CD8-positive, alpha-beta T cell (primary cell): ENCODE measurements at regions of chr6 and their contacts with region 1.

Region 1: GRCh38 chr6:156686995-156687788 is 90.0 kb upstream of the ARID1B start:
- DNase-seq: peak; percentile 60 to 92 (median 73)
- ATAC-seq: peak; percentile 83
- H3K4me3 ChIP-seq: peak overlapping the region; percentile 92 to 93
- H3K4me3 Mint-ChIP-seq: peak overlapping the region; percentile 89
- H3K27ac ChIP-seq: peak overlapping the region; percentile 89 to 95
- H3K27ac Mint-ChIP-seq: peak overlapping the region; percentile 97
- H3K4me1 ChIP-seq: peaks cover 8% of the 10 kb centered on the region
- H3K4me1 Mint-ChIP-seq: peaks cover 16% of the 10 kb centered on the region
- H3K27me3 ChIP-seq: no peaks in the 10 kb centered on the region
- H3K27me3 Mint-ChIP-seq: peaks cover 6% of the 10 kb centered on the region
- CTCF ChIP-seq: no peak

Region 2: DNA sequence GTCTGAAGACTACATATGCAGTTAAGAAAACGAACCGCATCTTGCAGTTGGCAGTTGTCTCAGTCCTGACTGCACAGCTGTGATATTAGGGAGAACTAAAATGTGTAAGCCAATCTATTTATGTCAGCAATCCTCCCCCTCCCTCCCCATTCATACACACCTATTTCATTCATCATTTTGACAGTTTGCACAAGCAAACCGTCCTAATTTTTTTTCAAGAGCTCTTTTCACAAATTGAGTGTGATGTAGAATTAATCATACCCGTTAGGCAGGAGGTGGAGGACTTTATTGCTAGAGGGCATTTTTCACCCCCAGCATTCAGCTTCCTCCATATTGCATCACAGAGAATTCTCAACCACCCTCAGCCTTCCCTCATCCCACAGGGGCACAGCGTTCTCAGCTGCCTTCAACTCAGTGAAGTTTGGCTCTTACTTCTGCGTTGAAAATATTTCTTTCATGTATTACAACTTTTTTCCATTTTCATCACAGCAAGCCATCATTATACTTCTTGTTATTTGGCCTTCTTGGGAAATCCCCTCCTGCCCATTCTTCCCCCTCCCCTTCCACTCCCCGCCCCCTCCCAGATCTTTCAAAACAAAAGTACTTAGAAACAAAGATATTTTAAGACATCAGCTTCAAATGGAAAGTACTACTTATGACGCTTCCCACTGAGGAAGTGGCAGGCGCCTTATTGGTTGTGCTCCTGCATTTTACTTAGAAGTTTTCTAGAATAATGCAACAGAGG is 1269.0 kb before region 1 on chr6:
- CTCF ChIA-PET with region 1: no interaction called
- POLR2A ChIA-PET with region 1: no interaction called
- intact Hi-C with region 1: loop called in 1 of 2 experiments (anchors 2 kb)
- DNase-seq: peak in 8 of 9 experiments; percentile 9 to 85 (median 36)
- ATAC-seq: peak; percentile 85
- H3K4me3 ChIP-seq: peak overlapping the region; percentile 21 to 41
- H3K4me3 Mint-ChIP-seq: peak overlapping the region; percentile 75
- H3K27ac ChIP-seq: peak overlapping the region; percentile 32 to 74
- H3K27ac Mint-ChIP-seq: peak overlapping the region; percentile 96
- H3K4me1 ChIP-seq: peaks cover 17% of the 10 kb centered on the region
- H3K4me1 Mint-ChIP-seq: peaks cover 40% of the 10 kb centered on the region
- H3K27me3 ChIP-seq: no peaks in the 10 kb centered on the region
- H3K27me3 Mint-ChIP-seq: no peaks in the 10 kb centered on the region
- CTCF ChIP-seq: no peak

Region 3: GRCh38 chr6:156707818-156708217 is 20.6 kb after region 1 on chr6:
- CTCF ChIA-PET with region 1: no interaction called
- POLR2A ChIA-PET with region 1: no interaction called
- intact Hi-C with region 1: no loop called
- DNase-seq: no peak
- ATAC-seq: no peak
- H3K4me3 ChIP-seq: no peak overlapping the region
- H3K4me3 Mint-ChIP-seq: no peak overlapping the region
- H3K27ac ChIP-seq: no peak overlapping the region
- H3K27ac Mint-ChIP-seq: no peak overlapping the region
- H3K4me1 ChIP-seq: no peaks in the 10 kb centered on the region
- H3K4me1 Mint-ChIP-seq: no peaks in the 10 kb centered on the region
- H3K27me3 ChIP-seq: no peaks in the 10 kb centered on the region
- H3K27me3 Mint-ChIP-seq: peaks cover 16% of the 10 kb centered on the region
- CTCF ChIP-seq: no peak

Region 4: GRCh38 chr6:156719720-156720563 is 32.8 kb after region 1 on chr6:
- CTCF ChIA-PET with region 1: no interaction called
- POLR2A ChIA-PET with region 1: interaction called, 4 read pairs
- intact Hi-C with region 1: loop called (anchors 1 to 2 kb)
- DNase-seq: peak; percentile 34 to 84 (median 73)
- ATAC-seq: peak; percentile 90
- H3K4me3 ChIP-seq: peak overlapping the region; percentile 57 to 59
- H3K4me3 Mint-ChIP-seq: peak overlapping the region; percentile 89
- H3K27ac ChIP-seq: peak overlapping the region; percentile 57 to 63
- H3K27ac Mint-ChIP-seq: peak overlapping the region; percentile 94
- H3K4me1 ChIP-seq: peaks cover 7% of the 10 kb centered on the region
- H3K4me1 Mint-ChIP-seq: peaks cover 14% of the 10 kb centered on the region
- H3K27me3 ChIP-seq: no peaks in the 10 kb centered on the region
- H3K27me3 Mint-ChIP-seq: no peaks in the 10 kb centered on the region
- CTCF ChIP-seq: no peak

Region 5: DNA sequence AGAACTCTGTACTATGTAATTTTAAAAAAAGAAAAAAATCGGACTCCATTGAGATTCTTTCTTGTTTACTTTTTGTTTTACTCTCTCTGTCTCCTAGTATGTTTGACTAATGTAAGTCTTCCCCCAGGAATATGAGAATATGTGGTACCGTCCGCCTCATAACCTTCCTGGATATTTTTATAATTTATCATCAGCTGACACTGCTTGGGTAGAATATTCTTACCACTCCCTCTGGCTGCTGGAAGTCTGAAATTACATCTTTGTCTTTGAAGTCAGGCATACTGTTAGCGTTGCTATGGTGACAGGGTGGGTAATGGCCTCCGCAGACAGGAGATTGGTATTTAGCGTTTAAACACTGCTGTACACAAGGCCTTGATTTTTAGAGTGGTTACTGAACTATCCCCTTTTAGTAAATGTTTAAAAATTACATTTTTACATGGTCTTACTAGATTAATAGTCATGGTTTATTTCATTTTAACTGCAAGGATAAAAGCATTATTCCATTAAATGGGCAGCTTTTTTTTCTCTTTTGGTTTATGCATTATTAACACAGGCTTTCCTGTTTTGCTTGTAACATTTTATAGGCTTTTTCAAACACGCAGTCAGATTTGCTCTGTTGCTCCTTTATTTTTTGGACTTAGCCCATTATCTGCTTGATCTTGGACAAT is 266.4 kb after region 1 on chr6:
- CTCF ChIA-PET with region 1: no interaction called
- POLR2A ChIA-PET with region 1: no interaction called
- intact Hi-C with region 1: loop called in 1 of 2 experiments (anchors 10 kb)
- DNase-seq: peak in 5 of 9 experiments; percentile 33 to 87 (median 67)
- ATAC-seq: peak; percentile 93
- H3K4me3 ChIP-seq: no peak overlapping the region
- H3K4me3 Mint-ChIP-seq: no peak overlapping the region
- H3K27ac ChIP-seq: no peak overlapping the region
- H3K27ac Mint-ChIP-seq: no peak overlapping the region
- H3K4me1 ChIP-seq: peaks cover 30% of the 10 kb centered on the region
- H3K4me1 Mint-ChIP-seq: peaks cover 73% of the 10 kb centered on the region
- H3K27me3 ChIP-seq: no peaks in the 10 kb centered on the region
- H3K27me3 Mint-ChIP-seq: no peaks in the 10 kb centered on the region
- CTCF ChIP-seq: peak; percentile 45

Region 6: DNA sequence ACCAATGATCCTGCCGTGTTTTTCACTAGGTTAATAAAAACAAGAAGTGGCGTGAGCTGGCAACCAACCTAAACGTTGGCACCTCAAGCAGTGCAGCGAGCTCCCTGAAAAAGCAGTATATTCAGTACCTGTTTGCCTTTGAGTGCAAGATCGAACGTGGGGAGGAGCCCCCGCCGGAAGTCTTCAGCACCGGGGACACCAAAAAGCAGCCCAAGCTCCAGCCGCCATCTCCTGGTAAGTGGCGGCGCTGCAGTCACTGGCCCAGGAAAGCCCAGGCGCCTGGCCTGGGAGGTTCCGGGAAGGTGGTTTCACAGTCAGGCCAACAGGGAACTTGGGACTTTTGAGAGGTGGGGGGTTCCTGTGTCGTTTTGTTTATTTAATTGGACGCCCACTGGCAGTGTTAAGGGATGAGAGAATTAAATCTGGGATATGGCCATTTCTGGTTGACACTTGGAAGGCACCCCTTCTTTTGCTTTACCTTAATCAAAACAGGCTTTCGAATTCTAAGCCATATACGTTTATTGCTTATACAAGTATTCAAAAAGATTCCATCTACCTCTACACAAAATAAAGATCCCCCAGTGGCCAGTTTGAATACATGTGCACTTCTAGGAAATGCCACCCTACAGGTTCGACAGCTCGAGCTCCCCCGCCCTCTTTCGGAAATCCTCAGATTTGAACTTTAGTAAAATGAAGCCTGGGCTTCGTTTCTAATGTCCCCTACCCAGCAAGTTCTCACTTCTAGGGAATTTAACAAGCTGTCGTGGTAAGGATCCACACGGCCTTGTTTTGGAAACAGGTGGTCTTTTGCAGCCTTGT is 497.2 kb after region 1 on chr6:
- CTCF ChIA-PET with region 1: no interaction called
- POLR2A ChIA-PET with region 1: no interaction called
- intact Hi-C with region 1: loop called in 1 of 2 experiments (anchors 10 kb)
- DNase-seq: peak; percentile 17 to 71 (median 64)
- ATAC-seq: peak; percentile 89
- H3K4me3 ChIP-seq: no peak overlapping the region
- H3K4me3 Mint-ChIP-seq: no peak overlapping the region
- H3K27ac ChIP-seq: no peak overlapping the region
- H3K27ac Mint-ChIP-seq: peak overlapping the region; percentile 10
- H3K4me1 ChIP-seq: no peaks in the 10 kb centered on the region
- H3K4me1 Mint-ChIP-seq: peaks cover 17% of the 10 kb centered on the region
- H3K27me3 ChIP-seq: no peaks in the 10 kb centered on the region
- H3K27me3 Mint-ChIP-seq: no peaks in the 10 kb centered on the region
- CTCF ChIP-seq: peak; percentile 69

Region 7: GRCh38 chr6:157379656-157380454 is 692.7 kb after region 1 on chr6:
- CTCF ChIA-PET with region 1: no interaction called
- POLR2A ChIA-PET with region 1: no interaction called
- intact Hi-C with region 1: loop called (anchors 5 kb)
- DNase-seq: peak; percentile 76 to 92 (median 89)
- ATAC-seq: peak; percentile 79
- H3K4me3 ChIP-seq: peak overlapping the region; percentile 92 to 96
- H3K4me3 Mint-ChIP-seq: peak overlapping the region; percentile 83
- H3K27ac ChIP-seq: peak overlapping the region; percentile 68 to 80
- H3K27ac Mint-ChIP-seq: peak overlapping the region; percentile 64
- H3K4me1 ChIP-seq: peaks cover 10% of the 10 kb centered on the region
- H3K4me1 Mint-ChIP-seq: peaks cover 20% of the 10 kb centered on the region
- H3K27me3 ChIP-seq: no peaks in the 10 kb centered on the region
- H3K27me3 Mint-ChIP-seq: no peaks in the 10 kb centered on the region
- CTCF ChIP-seq: no peak